ENCODE measurements at regions of chr7 and their contacts with region 1.

Region 1: GRCh38 chr7:143240291-143241168 is 18.7 kb downstream of the TAS2R40 start:
- DNase-seq: peak in 4 of 5 donors; percentile 53 to 72 (median 61)
- ATAC-seq: peak; percentile 71 to 91 (median 88)
- H3K4me3 ChIP-seq: peak overlapping the region in 1 of 12 donors; percentile 8
- H3K27ac ChIP-seq: peak overlapping the region in 2 of 12 donors; percentile 5 to 83
- H3K4me1 ChIP-seq: peaks cover 0 to 43% (median 3%) of the 10 kb centered on the region in 12 donors
- H3K27me3 ChIP-seq: no peaks in the 10 kb centered on the region
- CTCF ChIP-seq: peak; percentile 90 to 98 (median 94)
- POLR2A ChIP-seq: no peak

Region 2: DNA sequence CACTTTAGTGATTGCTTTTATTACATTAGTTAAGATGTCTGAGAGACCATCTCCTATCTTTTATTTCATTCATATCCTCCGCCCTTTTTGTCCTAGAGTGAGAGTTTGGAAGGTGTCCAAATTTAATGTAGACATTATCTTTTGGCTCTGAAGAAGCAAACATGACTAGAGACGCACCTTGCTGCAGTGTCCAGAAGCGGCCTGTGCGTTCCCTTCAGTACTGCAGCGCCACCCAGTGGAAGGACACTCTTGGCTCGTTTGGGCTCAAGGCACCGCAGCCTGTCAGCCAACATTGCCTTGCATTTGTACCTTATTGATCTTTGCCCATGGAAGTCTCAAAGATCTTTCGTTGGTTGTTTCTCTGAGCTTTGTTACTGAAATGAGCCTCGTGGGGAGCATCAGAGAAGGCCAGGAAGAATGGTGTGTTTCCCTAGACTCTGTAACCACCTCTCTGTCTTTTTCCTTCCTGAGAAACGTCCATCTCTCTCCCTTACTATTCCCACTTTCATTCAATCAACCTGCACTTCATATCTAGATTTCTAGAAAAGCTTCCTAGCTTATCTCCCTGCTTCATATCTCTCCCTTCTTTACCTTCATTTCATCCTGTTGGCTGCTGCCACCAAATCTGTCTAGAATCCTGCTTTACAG is 65.0 kb after region 1 on chr7:
- intact Hi-C with region 1: loop called (anchors 1 to 5 kb)
- DNase-seq: peak; percentile 64 to 83 (median 70)
- ATAC-seq: peak in 3 of 4 donors; percentile 86 to 93 (median 89)
- H3K4me3 ChIP-seq: no peak overlapping the region
- H3K27ac ChIP-seq: no peak overlapping the region
- H3K4me1 ChIP-seq: peaks cover 0 to 31% (median 0%) of the 10 kb centered on the region in 12 donors
- H3K27me3 ChIP-seq: no peaks in the 10 kb centered on the region
- CTCF ChIP-seq: peak; percentile 71 to 87 (median 80)
- POLR2A ChIP-seq: no peak

Region 3: GRCh38 chr7:143355450-143356385 is 115.2 kb after region 1 on chr7:
- intact Hi-C with region 1: no loop called
- DNase-seq: no peak
- ATAC-seq: no peak
- H3K4me3 ChIP-seq: no peak overlapping the region
- H3K27ac ChIP-seq: no peak overlapping the region
- H3K4me1 ChIP-seq: no peaks in the 10 kb centered on the region
- H3K27me3 ChIP-seq: peaks cover 0 to 20% (median under 1%) of the 10 kb centered on the region in 9 donors
- CTCF ChIP-seq: no peak
- POLR2A ChIP-seq: no peak

Region 4: DNA sequence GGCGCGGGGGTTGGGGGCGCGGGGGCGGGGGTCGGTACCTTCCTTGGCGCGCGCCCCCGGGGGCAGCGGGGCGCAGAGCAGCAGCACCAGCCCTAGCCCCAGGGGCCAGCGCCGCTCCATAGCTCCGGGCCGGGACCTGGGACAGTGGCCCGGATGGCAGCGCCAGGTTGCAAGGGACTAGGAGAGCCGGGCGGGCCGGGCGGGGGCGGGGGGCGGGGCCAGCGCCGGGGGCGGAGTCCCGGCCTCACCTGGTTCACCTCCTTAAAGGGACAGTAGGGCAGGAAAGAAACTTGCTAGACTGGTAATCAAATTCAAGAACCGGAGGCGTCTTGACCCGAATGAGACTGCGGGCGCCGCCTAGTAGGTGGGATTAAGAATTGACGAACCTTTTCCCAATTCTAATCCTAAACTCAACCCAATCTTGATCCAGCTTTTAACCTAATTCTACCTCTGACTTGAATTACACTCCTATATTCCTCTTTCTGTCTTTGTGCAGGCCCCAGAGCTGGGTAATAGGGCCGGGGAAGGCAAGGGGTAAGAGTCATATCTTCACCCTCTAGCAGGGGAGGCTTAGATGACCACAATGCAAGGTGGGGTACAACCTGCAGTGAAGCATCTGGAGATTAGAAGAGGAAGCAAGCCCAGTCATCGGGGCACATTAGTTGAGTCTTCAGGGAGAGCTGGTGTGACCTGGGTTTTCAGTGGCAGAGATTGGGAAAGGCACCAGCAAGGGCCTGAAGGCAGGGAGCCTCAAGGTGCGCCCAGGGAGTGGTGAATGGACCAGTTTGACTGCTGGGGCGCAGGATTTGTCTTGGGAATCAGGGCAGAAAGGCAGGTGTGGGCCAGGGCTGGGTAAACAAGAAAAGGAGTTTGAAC is 168.4 kb after region 1 on chr7 and contains the start of gene EPHA1:
- intact Hi-C with region 1: loop called in 2 of 10 experiments (anchors 2 to 5 kb)
- DNase-seq: peak in 1 of 5 donors; percentile 24
- ATAC-seq: no peak
- H3K4me3 ChIP-seq: peak within 1 kb of the TSS in 9 of 12 donors; percentile 18 to 53 (median 25)
- H3K27ac ChIP-seq: no peak within 1 kb of the TSS
- H3K4me1 ChIP-seq: peaks cover 0 to 63% (median 17%) of the 10 kb centered on the region in 12 donors
- H3K27me3 ChIP-seq: peaks cover 0 to 23% (median 0%) of the 10 kb centered on the region in 9 donors
- CTCF ChIP-seq: peak in 11 of 12 donors; percentile 11 to 46 (median 24)
- POLR2A ChIP-seq: no peak
- total RNA-seq, gene EPHA1: 0.06 to 0.51 (median 0.48) TPM in 3 of 9 donors, not detected in the others

Region 5: GRCh38 chr7:143490717-143491306 is 250.3 kb after region 1 on chr7:
- intact Hi-C with region 1: loop called in 1 of 10 experiments (anchors 10 kb)
- DNase-seq: peak in 4 of 5 donors; percentile 23 to 54 (median 34)
- ATAC-seq: peak in 3 of 4 donors; percentile 40 to 66 (median 53)
- H3K4me3 ChIP-seq: no peak overlapping the region
- H3K27ac ChIP-seq: no peak overlapping the region
- H3K4me1 ChIP-seq: peaks cover 0 to 60% (median 9%) of the 10 kb centered on the region in 12 donors
- H3K27me3 ChIP-seq: no peaks in the 10 kb centered on the region
- CTCF ChIP-seq: peak; percentile 30 to 70 (median 52)
- POLR2A ChIP-seq: no peak

Region 6: DNA sequence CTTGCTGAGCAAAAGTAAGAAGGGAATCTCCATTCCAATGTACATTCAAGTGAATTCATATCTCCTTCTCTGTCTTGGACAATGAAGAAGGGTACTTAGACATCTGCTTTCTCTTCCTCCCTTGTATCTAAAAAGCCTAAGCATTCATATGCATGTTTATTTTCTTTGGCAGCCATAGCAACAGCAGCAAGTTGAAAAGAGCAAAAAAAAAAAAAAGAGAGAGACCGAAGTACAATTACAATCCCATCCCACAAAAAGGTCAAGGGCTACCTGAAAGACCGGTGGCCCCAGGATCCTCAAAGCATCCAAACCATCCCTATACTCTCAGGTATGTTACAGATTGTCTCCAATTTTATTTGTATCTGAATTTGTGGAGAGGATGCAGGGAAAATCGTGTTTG is 718.3 kb after region 1 on chr7:
- intact Hi-C with region 1: no loop called
- DNase-seq: no peak
- ATAC-seq: no peak
- H3K4me3 ChIP-seq: no peak overlapping the region
- H3K27ac ChIP-seq: no peak overlapping the region
- H3K4me1 ChIP-seq: no peaks in the 10 kb centered on the region
- H3K27me3 ChIP-seq: no peaks in the 10 kb centered on the region
- CTCF ChIP-seq: no peak
- POLR2A ChIP-seq: no peak

Measured in heart left ventricle (tissue), 16 donors.